Mammary epithelial cell (primary cell): ENCODE measurements at regions of chr3 and their contacts with region 1.

Region 1: GRCh38 chr3:115092220-115092791 is 54.8 kb downstream of the ZBTB20 start:
- DNase-seq: peak; percentile 39
- H3K4me3 ChIP-seq: no peak overlapping the region
- H3K27ac ChIP-seq: no peak overlapping the region
- H3K4me1 ChIP-seq: peaks cover under 1% of the 10 kb centered on the region
- H3K27me3 ChIP-seq: no peaks in the 10 kb centered on the region
- CTCF ChIP-seq: peak; percentile 68 to 79

Region 2: DNA sequence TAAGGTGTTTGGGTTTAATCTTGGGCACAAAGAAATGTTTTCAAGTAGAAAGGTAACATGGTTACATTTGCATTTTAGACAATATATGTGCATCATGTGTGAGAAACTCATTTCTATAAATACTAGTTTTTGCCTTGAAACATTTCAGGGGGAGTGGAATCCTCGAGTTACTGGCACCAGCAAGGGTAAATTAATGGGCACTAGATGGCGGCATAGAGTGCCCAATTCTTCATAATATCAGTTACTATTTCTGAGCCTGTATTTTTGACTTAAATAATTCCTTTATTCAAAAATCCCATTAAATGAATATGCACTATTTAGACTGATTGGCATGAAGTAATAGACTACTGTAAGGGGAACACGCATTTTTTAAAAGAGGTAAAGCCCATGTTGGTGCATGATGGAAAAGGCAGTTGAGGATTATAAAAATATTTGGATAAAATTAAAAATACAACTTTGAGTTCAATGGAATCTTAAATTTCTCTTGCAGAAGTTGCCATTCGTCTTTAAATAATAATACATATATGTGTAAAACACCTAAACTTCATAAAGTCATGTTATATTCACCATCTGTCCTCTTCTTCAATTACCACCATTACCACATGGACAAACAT is 51.5 kb before region 1 on chr3:
- CTCF ChIA-PET with region 1: no interaction called
- dilution Hi-C with region 1: no loop called
- in situ Hi-C with region 1: no loop called
- intact Hi-C with region 1: loop called (anchors 1 kb)
- DNase-seq: peak; percentile 25
- H3K4me3 ChIP-seq: no peak overlapping the region
- H3K27ac ChIP-seq: no peak overlapping the region
- H3K4me1 ChIP-seq: no peaks in the 10 kb centered on the region
- H3K27me3 ChIP-seq: no peaks in the 10 kb centered on the region
- CTCF ChIP-seq: peak; percentile 72 to 78

Region 3: DNA sequence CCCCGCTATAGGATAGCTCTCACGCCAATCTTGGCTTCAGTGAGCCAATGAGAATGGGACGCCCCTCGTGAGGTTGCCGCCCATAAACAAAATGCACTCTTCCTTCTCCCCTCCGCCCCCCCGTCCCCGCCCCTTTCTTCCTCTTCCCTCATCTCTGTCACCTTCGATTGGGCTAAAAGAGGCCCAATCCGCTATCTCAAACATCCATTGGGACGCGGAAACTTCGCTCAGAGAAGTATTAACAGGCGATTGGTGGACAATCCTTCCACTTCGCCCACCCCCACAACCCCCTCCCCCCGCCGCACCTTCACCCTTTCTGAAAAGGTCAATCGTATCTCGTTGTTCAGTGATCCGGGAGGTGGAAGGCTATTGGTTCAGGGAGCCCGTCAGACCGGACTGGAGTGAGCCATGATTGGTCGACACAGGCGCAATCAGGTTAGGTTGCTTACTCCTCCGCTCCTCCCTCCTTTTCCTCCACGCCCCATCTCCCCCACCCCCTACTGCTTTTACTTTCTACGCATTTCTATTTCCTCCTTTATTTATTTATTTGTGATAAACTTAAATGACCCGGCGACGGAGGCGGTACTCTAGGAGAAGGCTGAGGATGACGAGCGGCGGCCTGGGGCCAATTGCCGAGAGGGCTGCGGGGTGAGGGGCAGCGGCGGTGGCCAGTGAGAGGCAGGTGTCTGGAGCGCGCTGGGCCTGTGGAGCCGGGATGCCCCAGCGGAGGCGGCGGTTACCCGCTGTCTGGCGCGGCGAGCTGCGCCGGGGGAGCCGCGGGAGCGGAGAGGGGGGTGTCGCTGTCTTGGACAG is 55.2 kb after region 1 on chr3:
- CTCF ChIA-PET with region 1: no interaction called
- dilution Hi-C with region 1: no loop called
- in situ Hi-C with region 1: no loop called
- intact Hi-C with region 1: loop called (anchors 2 kb)
- DNase-seq: peak; percentile 100
- H3K4me3 ChIP-seq: peak overlapping the region; percentile 67 to 87 (median 74)
- H3K27ac ChIP-seq: peak overlapping the region; percentile 74
- H3K4me1 ChIP-seq: peaks cover 13% of the 10 kb centered on the region
- H3K27me3 ChIP-seq: no peaks in the 10 kb centered on the region
- CTCF ChIP-seq: no peak

Region 4: GRCh38 chr3:115169808-115170207 is 77.5 kb after region 1 on chr3:
- CTCF ChIA-PET with region 1: no interaction called
- dilution Hi-C with region 1: no loop called
- in situ Hi-C with region 1: no loop called
- intact Hi-C with region 1: loop called (anchors 2 kb)
- DNase-seq: no peak
- H3K4me3 ChIP-seq: no peak overlapping the region
- H3K27ac ChIP-seq: no peak overlapping the region
- H3K4me1 ChIP-seq: no peaks in the 10 kb centered on the region
- H3K27me3 ChIP-seq: no peaks in the 10 kb centered on the region
- CTCF ChIP-seq: peak in 1 of 2 donors; percentile 5

Region 5: GRCh38 chr3:115233021-115233420 is 140.7 kb after region 1 on chr3:
- CTCF ChIA-PET with region 1: no interaction called
- dilution Hi-C with region 1: no loop called
- in situ Hi-C with region 1: no loop called
- intact Hi-C with region 1: no loop called
- DNase-seq: no peak
- H3K4me3 ChIP-seq: no peak overlapping the region
- H3K27ac ChIP-seq: no peak overlapping the region
- H3K4me1 ChIP-seq: no peaks in the 10 kb centered on the region
- H3K27me3 ChIP-seq: no peaks in the 10 kb centered on the region
- CTCF ChIP-seq: no peak